ENCODE measurements at regions of chr20 and their contacts with region 1.

Region 1: DNA sequence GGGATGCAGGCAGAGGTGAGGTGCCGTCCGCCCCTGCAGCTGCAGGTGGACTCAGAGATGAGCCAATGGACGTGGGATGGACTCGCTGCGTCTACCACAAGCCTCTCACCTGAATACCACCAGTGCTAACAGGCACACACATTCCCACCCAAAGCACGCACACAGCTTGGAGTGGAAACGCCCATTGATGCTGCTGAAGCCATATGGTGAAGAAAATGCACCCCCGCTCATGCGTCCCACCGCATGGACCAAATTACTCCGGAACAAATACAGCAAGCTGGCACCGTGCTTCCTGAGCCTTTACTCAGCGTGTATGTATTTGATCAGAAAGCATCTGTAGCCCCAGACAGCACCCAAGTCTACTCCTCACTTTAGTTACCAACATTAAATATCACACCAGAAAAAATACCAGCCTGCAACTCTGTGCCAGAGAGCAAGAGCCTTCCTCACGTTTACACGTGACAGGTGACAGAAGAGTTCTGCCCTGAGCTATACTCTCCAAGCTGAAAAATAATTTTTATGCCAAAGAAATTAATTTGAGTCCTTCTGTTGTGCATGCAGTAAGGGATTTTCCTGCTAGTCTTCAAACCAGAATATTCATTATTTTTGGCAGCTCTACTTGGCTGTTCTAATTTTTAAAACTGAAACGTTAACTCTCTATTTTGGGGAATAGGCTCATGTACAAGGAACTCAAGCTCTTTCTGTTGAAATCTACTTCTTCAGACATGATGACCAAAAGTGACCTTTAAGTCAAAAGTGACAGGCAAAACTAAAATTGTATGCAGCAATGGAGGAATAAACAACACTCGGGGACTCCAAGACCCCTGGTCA is 58.2 kb upstream of the SYNDIG1 start:
- DNase-seq: no peak
- ATAC-seq: no peak
- H3K4me3 ChIP-seq: no peak overlapping the region
- H3K27ac ChIP-seq: no peak overlapping the region
- H3K4me1 ChIP-seq: peaks cover 0 to 4% (median 0%) of the 10 kb centered on the region in 9 donors
- H3K27me3 ChIP-seq: peaks cover 0 to 10% (median 0%) of the 10 kb centered on the region in 7 donors
- CTCF ChIP-seq: no peak

Region 2: DNA sequence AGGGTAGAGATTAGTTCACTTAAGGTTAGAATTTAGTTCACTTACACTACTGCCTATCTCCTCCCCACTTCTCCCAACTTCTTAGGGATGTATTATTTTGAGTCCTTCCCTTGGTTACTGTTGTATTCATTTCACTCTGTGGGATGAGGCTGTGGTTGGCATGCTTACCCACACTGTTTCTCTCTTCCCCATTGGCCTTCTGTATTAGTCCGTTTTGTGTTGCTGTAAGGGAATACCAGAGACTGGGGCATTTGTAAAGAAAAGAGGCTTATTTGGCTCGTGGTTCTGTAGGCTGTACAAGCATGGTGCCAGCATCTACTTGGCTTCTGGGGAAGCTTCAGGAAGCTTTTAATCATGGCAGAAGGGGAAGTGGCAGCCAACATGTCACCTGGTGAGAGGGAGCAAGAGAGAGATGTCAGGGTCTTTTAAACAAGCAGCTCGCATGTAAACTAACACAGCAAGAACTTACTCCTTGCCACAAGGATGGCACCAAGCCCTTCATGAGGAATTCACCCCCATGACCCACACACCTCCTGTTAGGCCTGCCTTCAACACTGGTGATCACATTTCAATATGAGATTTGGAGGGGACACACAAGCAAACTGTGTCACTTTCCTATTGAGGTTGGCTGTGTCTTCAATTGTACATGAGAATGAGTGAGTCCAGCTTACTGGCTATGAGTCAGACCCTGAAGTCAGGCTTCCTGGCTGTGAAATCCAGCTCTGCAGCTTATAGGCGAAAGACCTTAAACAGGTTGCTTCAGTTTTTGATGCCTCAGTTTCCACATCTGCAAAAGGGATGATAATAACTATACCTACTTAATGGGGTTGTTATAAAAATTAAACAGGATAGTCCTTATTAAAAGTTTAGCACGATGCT is 111.5 kb after region 1 on chr20:
- intact Hi-C with region 1: no loop called
- DNase-seq: no peak
- ATAC-seq: no peak
- H3K4me3 ChIP-seq: no peak overlapping the region
- H3K27ac ChIP-seq: no peak overlapping the region
- H3K4me1 ChIP-seq: no peaks in the 10 kb centered on the region
- H3K27me3 ChIP-seq: no peaks in the 10 kb centered on the region
- CTCF ChIP-seq: no peak

Region 3: GRCh38 chr20:24895431-24895830 is 484.2 kb after region 1 on chr20:
- intact Hi-C with region 1: loop called in 1 of 10 experiments (anchors 5 kb)
- DNase-seq: no peak
- ATAC-seq: no peak
- H3K4me3 ChIP-seq: no peak overlapping the region
- H3K27ac ChIP-seq: no peak overlapping the region
- H3K4me1 ChIP-seq: no peaks in the 10 kb centered on the region
- H3K27me3 ChIP-seq: no peaks in the 10 kb centered on the region
- CTCF ChIP-seq: no peak

Region 4: GRCh38 chr20:24948939-24949679 is 537.9 kb after region 1 on chr20 and contains the start of gene CST7:
- intact Hi-C with region 1: no loop called
- DNase-seq: peak in 1 of 2 donors; percentile 39
- ATAC-seq: peak; percentile 49 to 66 (median 59)
- H3K4me3 ChIP-seq: peak within 1 kb of the TSS in 3 of 10 donors; percentile 14 to 59 (median 24)
- H3K27ac ChIP-seq: peak within 1 kb of the TSS in 2 of 10 donors; percentile 31 to 92
- H3K4me1 ChIP-seq: peaks cover 0 to 35% (median 0%) of the 10 kb centered on the region in 9 donors
- H3K27me3 ChIP-seq: peaks cover 0 to 17% (median 10%) of the 10 kb centered on the region in 7 donors
- CTCF ChIP-seq: no peak
- total RNA-seq, gene CST7: 0.28 to 10.0 (median 1.0) TPM in 8 of 10 donors, not detected in the others